Tibial artery (tissue), 4 donors: ENCODE measurements at regions of chr10 and their contacts with region 1.

Region 1: GRCh38 chr10:133261726-133262325 is 14.8 kb downstream of the ADAM8 start:
- DNase-seq: peak; percentile 87 to 89
- H3K4me3 ChIP-seq: peak overlapping the region; percentile 84 to 100
- H3K27ac ChIP-seq: peak overlapping the region; percentile 86 to 95
- H3K4me1 ChIP-seq: peaks cover 0 to 52% (median 42%) of the 10 kb centered on the region in 4 donors
- H3K27me3 ChIP-seq: no peaks in the 10 kb centered on the region
- CTCF ChIP-seq: no peak

Region 2: GRCh38 chr10:133214468-133215410 is 47.1 kb before region 1 on chr10:
- intact Hi-C with region 1: no loop called
- DNase-seq: no peak
- H3K4me3 ChIP-seq: no peak overlapping the region
- H3K27ac ChIP-seq: no peak overlapping the region
- H3K4me1 ChIP-seq: no peaks in the 10 kb centered on the region
- H3K27me3 ChIP-seq: peaks cover 0 to 46% of the 10 kb centered on the region in 2 donors
- CTCF ChIP-seq: no peak

Region 3: GRCh38 chr10:133309111-133309719 is 47.4 kb after region 1 on chr10:
- intact Hi-C with region 1: loop called (anchors 2 kb)
- DNase-seq: peak; percentile 84 to 93
- H3K4me3 ChIP-seq: peak overlapping the region; percentile 86 to 93
- H3K27ac ChIP-seq: peak overlapping the region; percentile 90 to 93
- H3K4me1 ChIP-seq: peaks cover 5 to 34% (median 26%) of the 10 kb centered on the region in 4 donors
- H3K27me3 ChIP-seq: no peaks in the 10 kb centered on the region
- CTCF ChIP-seq: no peak

Region 4: GRCh38 chr10:133378251-133379096 is 116.6 kb after region 1 on chr10:
- intact Hi-C with region 1: loop called (anchors 5 kb)
- DNase-seq: peak in 1 of 2 donors; percentile 82
- H3K4me3 ChIP-seq: peak overlapping the region; percentile 81 to 96
- H3K27ac ChIP-seq: peak overlapping the region; percentile 82 to 95
- H3K4me1 ChIP-seq: peaks cover 0 to 28% (median 21%) of the 10 kb centered on the region in 4 donors
- H3K27me3 ChIP-seq: no peaks in the 10 kb centered on the region
- CTCF ChIP-seq: no peak